Activated T-helper 1 cell treated with anti-CD3 and anti-CD28 coated beads, Interleukin-12 subunit alpha, Interleukin-12 subunit beta, Interleukin-2, Interleukin-4 antibody, amounts not matched to agents 30 ng/mL and 10 ng/mL and 1 ng/mL, durations not matched to agents 14 hours and 24 hours and 36 hours (primary cell): ENCODE measurements at regions of chr1 and their contacts with region 1.

Region 1: GRCh38 chr1:1231400-1232223 is at the start of gene SDF4:
- DNase-seq: peak; percentile 98
- H3K4me3 Mint-ChIP-seq: peak within 1 kb of the TSS; percentile 94
- H3K27ac Mint-ChIP-seq: peak within 1 kb of the TSS; percentile 90
- H3K4me1 Mint-ChIP-seq: peaks cover 27% of the 10 kb centered on the region
- H3K27me3 Mint-ChIP-seq: no peaks in the 10 kb centered on the region
- total RNA-seq, gene SDF4: 202 TPM in 2 replicates

Region 2: DNA sequence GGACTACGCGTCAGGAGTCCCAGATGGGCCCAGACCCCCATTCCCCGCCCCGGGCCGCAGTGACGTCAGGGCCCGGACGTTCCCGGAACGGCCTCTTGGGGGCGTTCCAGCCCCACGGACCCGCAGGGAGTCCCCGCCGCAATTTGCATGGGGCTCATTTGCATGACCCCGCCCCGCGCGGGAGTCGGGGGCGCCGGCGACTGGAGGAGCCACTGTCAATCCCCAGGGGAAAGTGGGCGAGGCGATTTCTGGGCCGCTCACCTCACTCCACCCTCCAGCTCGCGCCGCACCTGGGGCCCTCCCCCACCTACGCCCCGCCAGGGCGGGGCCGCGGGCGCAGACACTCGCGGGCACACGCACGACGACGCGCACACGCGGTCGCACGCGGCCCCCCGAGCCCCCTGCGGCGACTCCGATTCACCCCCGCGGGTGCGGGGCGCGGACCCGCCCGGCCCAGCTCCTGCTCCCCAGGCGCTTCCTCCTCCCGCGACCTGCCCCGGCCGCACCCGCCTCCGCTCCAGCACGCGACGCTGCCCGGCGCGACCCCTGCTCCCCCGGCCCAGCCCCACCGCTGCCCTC is 198.5 kb before region 1 on chr1:
- intact Hi-C with region 1: loop called (anchors 5 kb)
- DNase-seq: peak; percentile 84
- H3K4me3 Mint-ChIP-seq: peak overlapping the region; percentile 37
- H3K27ac Mint-ChIP-seq: no peak overlapping the region
- H3K4me1 Mint-ChIP-seq: no peaks in the 10 kb centered on the region
- H3K27me3 Mint-ChIP-seq: peaks cover 14% of the 10 kb centered on the region

Region 3: GRCh38 chr1:1109743-1110142 is 121.9 kb before region 1 on chr1:
- intact Hi-C with region 1: no loop called
- DNase-seq: no peak
- H3K4me3 Mint-ChIP-seq: no peak overlapping the region
- H3K27ac Mint-ChIP-seq: no peak overlapping the region
- H3K4me1 Mint-ChIP-seq: peaks cover 5% of the 10 kb centered on the region
- H3K27me3 Mint-ChIP-seq: no peaks in the 10 kb centered on the region

Region 4: GRCh38 chr1:1122078-1122811 is 109.4 kb before region 1 on chr1:
- intact Hi-C with region 1: loop called (anchors 1 kb)
- DNase-seq: peak; percentile 80
- H3K4me3 Mint-ChIP-seq: no peak overlapping the region
- H3K27ac Mint-ChIP-seq: no peak overlapping the region
- H3K4me1 Mint-ChIP-seq: peaks cover 5% of the 10 kb centered on the region
- H3K27me3 Mint-ChIP-seq: peaks cover 11% of the 10 kb centered on the region

Region 5: GRCh38 chr1:1144122-1144842 is 87.3 kb before region 1 on chr1:
- intact Hi-C with region 1: loop called (anchors 5 kb)
- DNase-seq: peak; percentile 67
- H3K4me3 Mint-ChIP-seq: peak overlapping the region; percentile 37
- H3K27ac Mint-ChIP-seq: peak overlapping the region; percentile 97
- H3K4me1 Mint-ChIP-seq: peaks cover 9% of the 10 kb centered on the region
- H3K27me3 Mint-ChIP-seq: no peaks in the 10 kb centered on the region

Region 6: GRCh38 chr1:1157426-1157913 is 74.1 kb before region 1 on chr1:
- intact Hi-C with region 1: no loop called
- DNase-seq: peak; percentile 59
- H3K4me3 Mint-ChIP-seq: peak overlapping the region; percentile 71
- H3K27ac Mint-ChIP-seq: peak overlapping the region; percentile 67
- H3K4me1 Mint-ChIP-seq: peaks cover 5% of the 10 kb centered on the region
- H3K27me3 Mint-ChIP-seq: no peaks in the 10 kb centered on the region

Region 7: DNA sequence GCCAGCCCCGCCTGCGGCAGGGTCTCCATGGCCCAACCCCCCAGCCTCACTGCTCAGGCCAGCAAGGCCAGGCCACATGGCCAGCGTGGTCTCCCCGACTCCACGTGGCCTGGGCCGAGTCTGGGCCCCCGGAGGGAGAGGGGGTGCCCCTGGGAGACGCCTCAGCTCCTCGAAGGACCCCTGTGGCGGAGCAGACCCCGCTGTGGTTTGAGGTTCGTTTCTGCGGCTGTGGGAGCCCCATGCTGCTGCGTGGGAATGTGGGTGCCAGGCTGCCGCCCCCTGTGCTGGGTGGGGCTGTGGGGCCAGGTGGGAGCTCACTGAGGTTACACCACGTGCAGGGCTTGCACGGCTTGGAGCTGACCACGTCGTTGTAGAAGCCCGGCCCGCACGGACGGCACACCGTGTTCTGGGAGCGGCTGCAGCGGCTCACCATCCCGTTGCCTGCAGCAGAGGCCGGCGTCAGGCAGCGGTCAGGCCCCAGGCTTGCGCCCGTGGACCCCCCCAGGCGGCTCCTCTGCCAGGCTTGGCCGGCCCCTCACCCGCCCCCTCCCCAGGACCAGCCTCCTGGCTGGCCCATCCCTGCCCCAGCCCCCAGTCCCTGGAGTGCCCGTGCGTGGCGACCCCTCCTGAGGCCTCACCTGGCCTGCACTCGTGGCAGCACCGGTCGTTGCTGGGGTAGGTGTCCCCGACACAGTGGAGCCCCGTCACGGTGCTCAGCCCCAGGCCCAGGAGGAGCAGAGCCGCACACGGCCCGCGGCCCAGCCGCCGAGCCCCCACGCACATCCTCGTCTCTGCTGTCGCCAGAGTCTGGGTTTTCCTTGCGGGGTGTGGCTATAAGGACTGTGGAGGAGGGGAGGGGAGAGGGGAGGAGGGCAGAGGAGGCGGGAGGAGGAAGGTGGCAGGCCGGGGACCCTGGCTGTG is 18.0 kb before region 1 on chr1 and contains the start of gene TNFRSF4:
- intact Hi-C with region 1: loop called (anchors 1 kb)
- DNase-seq: no peak
- H3K4me3 Mint-ChIP-seq: peak within 1 kb of the TSS; percentile 86
- H3K27ac Mint-ChIP-seq: peak within 1 kb of the TSS; percentile 87
- H3K4me1 Mint-ChIP-seq: peaks cover 48% of the 10 kb centered on the region
- H3K27me3 Mint-ChIP-seq: no peaks in the 10 kb centered on the region
- total RNA-seq, gene TNFRSF4: 788 and 811 TPM in 2 replicates

Region 8: GRCh38 chr1:1273512-1274298 is 42.1 kb after region 1 on chr1 and contains the start of gene UBE2J2:
- intact Hi-C with region 1: loop called (anchors 5 kb)
- DNase-seq: peak; percentile 86
- H3K4me3 Mint-ChIP-seq: peak within 1 kb of the TSS; percentile 90
- H3K27ac Mint-ChIP-seq: peak within 1 kb of the TSS; percentile 63
- H3K4me1 Mint-ChIP-seq: peaks cover 40% of the 10 kb centered on the region
- H3K27me3 Mint-ChIP-seq: no peaks in the 10 kb centered on the region
- total RNA-seq, gene UBE2J2: 95.6 and 99.5 TPM in 2 replicates

Region 9: GRCh38 chr1:1307908-1308755 is 76.5 kb after region 1 on chr1 and contains the starts of genes ACAP3 and PUSL1:
- intact Hi-C with region 1: no loop called
- DNase-seq: peak; percentile 86
- H3K4me3 Mint-ChIP-seq: peak within 1 kb of the TSS; percentile 88
- H3K27ac Mint-ChIP-seq: peak within 1 kb of the TSS; percentile 86
- H3K4me1 Mint-ChIP-seq: peaks cover 15% of the 10 kb centered on the region
- H3K27me3 Mint-ChIP-seq: no peaks in the 10 kb centered on the region
- total RNA-seq, gene ACAP3: 47.7 and 55.1 TPM in 2 replicates
- total RNA-seq, gene PUSL1: 34.6 and 36.8 TPM in 2 replicates

Region 10: DNA sequence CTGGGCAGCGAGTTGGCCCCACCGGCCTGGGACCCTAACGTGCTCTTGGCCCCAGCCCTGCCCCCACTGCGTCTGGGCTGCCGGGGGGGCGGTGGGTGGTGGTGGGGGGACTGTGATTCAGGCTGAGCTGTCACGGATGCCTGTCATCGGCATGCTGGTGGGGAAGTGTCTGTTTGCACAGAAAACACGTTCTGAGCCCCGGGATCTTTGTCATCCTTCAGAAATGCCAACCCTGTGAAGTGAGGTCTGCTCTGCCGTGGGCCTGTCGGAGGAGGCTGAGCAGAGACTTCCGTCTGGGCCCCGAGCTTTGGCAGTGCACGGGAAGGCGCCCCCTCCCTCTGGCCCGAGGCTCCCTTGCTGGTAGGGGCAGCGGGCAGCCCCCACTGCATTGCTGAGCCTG is 1220.1 kb after region 1 on chr1:
- intact Hi-C with region 1: no loop called
- DNase-seq: no peak
- H3K4me3 Mint-ChIP-seq: no peak overlapping the region
- H3K27ac Mint-ChIP-seq: no peak overlapping the region
- H3K4me1 Mint-ChIP-seq: no peaks in the 10 kb centered on the region
- H3K27me3 Mint-ChIP-seq: no peaks in the 10 kb centered on the region